ENCODE measurements at regions of chr15 and their contacts with region 1.

Region 1: DNA sequence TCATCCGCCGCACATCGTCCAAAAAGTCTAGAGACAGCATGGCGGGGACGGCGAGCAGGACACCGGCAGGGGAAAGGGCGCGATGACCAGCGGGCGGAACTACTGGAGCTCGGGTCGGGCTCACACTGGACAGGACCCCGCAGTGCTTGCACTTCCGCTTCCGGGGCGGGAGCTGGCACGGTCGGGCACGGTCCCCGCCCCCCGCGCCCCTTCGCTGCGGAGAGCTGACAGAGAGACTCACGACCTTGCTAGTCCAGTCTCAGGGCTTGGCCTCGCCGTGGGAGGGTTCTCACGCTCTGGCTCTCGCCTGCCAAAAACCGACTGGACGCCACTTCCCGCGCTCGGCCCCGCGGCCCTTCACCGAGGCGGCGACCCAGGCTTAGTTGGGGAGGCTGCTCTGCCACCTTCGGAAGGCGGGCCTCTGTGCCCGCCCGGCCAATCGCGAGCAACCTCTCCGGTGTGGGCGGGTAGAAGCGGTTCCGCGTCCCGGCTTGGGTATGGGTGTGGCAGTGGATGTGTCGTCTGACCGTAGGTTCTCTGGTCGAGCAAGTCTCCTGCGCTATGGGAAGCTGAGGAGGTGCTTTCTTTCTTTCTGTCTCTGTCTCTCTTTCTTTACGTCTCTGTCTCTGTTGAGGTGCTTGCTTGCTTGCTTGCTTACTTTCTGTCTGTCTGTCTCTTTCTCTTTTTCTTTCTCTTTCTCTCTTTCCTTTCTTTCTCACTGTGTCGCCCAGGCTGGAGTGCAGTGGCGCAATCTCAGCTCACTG is at the start of gene SEC11A:
- H3K4me3 ChIP-seq: peak within 1 kb of the TSS; percentile 78
- H3K27ac ChIP-seq: peak within 1 kb of the TSS; percentile 79
- H3K4me1 ChIP-seq: peaks cover 3% of the 10 kb centered on the region; the same call in 1 of the 2 replicates
- CTCF ChIP-seq: no peak; the same call in 1 of the 2 replicates

Region 2: DNA sequence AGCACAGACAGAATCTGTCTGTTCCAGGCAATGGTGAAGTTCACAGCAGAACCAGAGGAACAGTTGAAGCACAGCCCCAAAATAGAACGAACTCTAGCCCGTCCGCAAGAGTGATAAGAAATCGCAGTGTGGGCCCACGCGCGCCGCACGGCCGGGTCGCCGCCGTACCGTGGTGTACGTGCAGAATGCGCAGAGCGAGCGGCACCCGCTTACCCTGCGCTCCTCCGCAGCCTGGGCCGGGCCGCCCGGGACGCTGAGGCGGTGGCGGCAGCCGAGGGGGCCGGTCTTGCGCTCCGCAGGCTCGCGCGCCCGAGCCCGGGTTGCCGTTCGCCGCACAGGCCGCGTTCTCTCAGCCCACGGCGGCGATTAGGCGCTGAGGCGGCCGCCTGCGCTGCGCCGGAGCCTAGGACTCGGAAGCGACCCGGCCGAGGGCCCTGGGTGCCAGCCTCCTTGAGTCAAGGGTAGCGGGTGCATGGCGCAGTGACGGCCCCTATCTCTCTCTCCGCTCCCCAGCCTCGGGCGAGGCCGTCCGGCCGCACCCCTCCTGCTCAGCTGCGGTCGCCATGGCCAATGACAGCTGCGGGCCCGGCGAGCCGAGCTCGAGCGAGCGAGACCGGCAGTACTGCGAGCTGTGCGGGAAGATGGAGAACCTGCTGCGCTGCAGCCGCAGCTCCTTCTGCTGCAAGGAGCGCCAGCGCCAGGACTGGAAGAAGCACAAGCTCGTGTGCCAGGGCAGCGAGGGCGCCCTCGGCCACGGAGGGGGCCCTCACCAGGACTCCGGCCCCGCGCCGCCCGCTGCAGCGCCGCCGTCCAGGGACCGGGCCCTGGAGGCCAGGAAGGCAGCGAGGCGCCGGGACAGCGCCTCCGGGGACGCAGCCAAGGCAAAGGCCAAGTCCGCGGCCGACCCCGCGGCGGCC is 82.6 kb before region 1 on chr15:
- CTCF ChIA-PET with region 1: interaction called, 3 read pairs
- POLR2A ChIA-PET with region 1: interaction called, 11 read pairs
- H3K4me3 ChIP-seq: peak overlapping the region; percentile 68
- H3K27ac ChIP-seq: peak overlapping the region; percentile 90
- H3K4me1 ChIP-seq: peaks cover 4% of the 10 kb centered on the region
- CTCF ChIP-seq: peak; percentile 36; the same call in 1 of the 2 replicates

Region 3: DNA sequence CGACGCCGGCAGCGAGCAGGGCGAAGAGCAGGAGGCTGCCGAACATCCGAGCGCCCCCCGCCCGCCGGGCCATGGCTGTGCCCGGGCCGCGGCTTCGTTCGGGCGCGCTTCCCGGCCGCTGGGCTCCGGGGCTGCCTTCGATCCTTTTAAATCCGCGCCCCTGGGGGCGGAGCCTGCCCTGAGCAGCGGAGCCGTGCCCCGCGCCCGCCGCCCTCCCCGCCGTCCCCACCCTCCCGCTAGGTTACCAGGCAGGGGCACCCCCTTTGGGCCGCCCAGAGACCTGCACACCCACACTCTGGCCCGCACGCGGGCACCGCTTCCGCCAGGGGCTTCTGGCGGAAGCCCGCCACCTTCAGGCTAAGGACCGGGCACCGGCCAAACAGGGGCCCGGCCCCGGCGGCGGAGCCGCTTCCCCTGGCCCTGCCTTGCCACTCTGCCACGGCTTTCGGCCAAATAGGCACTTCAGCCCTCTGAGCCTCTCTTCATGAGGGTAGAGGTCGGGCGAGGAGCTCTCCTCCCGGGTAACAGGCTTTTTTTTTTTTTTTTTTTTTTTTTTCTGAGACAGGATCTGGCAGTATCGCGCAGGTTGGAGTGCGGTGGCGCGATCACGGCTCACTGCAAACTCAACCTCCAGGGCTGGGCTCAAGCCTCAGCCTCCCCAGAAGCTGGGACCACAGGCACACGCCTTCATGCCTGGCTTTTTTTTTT is 58.0 kb before region 1 on chr15 and contains the start of gene NMB:
- CTCF ChIA-PET with region 1: interaction called, 4 read pairs
- POLR2A ChIA-PET with region 1: interaction called, 26 read pairs
- H3K4me3 ChIP-seq: peak within 1 kb of the TSS; percentile 35
- H3K27ac ChIP-seq: peak within 1 kb of the TSS; percentile 46; the same call in 1 of the 2 replicates
- H3K4me1 ChIP-seq: peaks cover 14% of the 10 kb centered on the region
- CTCF ChIP-seq: peak; percentile 92

Region 4: DNA sequence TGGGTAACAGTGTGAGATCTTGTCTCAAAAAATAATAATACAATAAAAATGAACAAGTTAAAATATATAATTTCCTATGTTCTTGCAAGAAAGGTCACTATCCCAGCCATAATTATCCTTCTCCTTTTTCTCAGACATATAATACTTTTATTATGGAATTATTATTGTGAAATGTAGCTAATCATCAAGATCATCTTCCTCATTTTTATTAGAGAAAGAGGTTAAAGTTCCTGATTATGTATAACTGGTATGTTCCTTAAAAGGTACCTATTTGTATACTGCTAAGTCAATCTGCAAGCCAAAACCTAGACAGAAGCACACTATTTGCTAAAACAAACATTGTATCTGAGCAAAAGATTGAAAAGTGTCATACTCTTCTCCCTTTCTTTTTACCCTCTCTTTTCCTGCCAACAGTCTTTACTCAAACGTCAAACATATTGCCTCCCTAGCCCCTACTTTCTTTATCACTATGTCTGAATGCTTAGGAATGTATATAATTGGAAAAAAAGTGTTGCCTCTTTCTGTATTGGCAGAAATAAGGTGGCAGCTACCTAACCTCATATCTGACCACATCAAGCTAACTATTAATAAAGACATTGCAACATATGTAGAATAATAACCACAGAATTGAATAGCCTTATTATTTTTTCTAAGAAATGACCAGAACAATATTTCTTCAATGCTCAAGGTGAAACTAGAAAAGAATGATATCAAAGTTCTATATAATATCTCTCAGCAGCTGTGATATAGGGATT is 18.8 kb before region 1 on chr15:
- CTCF ChIA-PET with region 1: interaction called, 3 read pairs
- POLR2A ChIA-PET with region 1: interaction called, 13 read pairs
- H3K4me3 ChIP-seq: no peak overlapping the region
- H3K27ac ChIP-seq: no peak overlapping the region
- H3K4me1 ChIP-seq: no peaks in the 10 kb centered on the region
- CTCF ChIP-seq: no peak

Region 5: DNA sequence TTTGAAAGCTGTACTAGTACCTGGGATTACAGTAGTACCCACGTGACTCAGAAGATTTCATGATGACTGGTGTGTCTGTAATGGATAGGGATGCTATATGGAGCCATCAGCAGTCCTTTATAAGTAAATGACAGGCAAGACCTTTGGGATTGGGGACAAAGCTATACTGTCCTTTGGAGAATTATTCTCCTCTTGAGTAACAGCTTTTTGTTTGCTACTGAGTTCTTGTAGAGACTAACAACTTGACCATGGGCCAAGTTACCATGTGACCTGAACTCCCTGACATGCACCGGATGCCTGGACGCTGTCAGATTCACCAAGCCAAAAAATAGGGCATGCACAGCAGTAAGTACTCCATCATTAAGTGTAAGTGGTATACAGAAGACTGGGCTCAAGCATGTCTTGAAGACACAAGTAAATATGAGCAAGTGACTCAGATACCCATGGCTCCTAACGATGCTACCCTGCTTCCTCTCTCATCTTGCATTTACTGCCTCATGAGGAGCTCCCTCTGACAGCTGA is 13.2 kb before region 1 on chr15:
- CTCF ChIA-PET with region 1: interaction called, 3 read pairs
- POLR2A ChIA-PET with region 1: interaction called, 13 read pairs
- H3K4me3 ChIP-seq: no peak overlapping the region
- H3K27ac ChIP-seq: no peak overlapping the region
- H3K4me1 ChIP-seq: no peaks in the 10 kb centered on the region
- CTCF ChIP-seq: no peak

Region 6: GRCh38 chr15:84734794-84735479 is 18.7 kb after region 1 on chr15:
- CTCF ChIA-PET with region 1: interaction called, 3 read pairs
- POLR2A ChIA-PET with region 1: interaction called, 64 read pairs
- H3K4me3 ChIP-seq: peak overlapping the region; percentile 12
- H3K27ac ChIP-seq: peak overlapping the region; percentile 33; the same call in 1 of the 2 replicates
- H3K4me1 ChIP-seq: no peaks in the 10 kb centered on the region
- CTCF ChIP-seq: no peak

Region 7: GRCh38 chr15:84748274-84749110 is 32.3 kb after region 1 on chr15 and contains the start of gene ZNF592:
- CTCF ChIA-PET with region 1: interaction called, 3 read pairs
- POLR2A ChIA-PET with region 1: interaction called, 15 read pairs
- H3K4me3 ChIP-seq: peak within 1 kb of the TSS; percentile 90
- H3K27ac ChIP-seq: peak within 1 kb of the TSS; percentile 95
- H3K4me1 ChIP-seq: peaks cover 19% of the 10 kb centered on the region
- CTCF ChIP-seq: no peak